ENCODE measurements at regions of chr2 and their contacts with region 1.

Region 1: GRCh38 chr2:198309673-198310280 is 505.4 kb downstream of the PLCL1 start:
- DNase-seq: peak in 1 of 2 experiments; percentile 63
- H3K4me3 ChIP-seq: no peak overlapping the region
- H3K4me3 Mint-ChIP-seq: no peak overlapping the region
- H3K27ac Mint-ChIP-seq: no peak overlapping the region
- H3K4me1 ChIP-seq: 0 out of 2 replicates have a peak, but pooled peaks cover 3% of the 10 kb centered on the region
- H3K4me1 Mint-ChIP-seq: no peaks in the 10 kb centered on the region
- H3K27me3 ChIP-seq: no peaks in the 10 kb centered on the region; the same call in 1 of the 2 replicates
- H3K27me3 Mint-ChIP-seq: peaks cover 16% of the 10 kb centered on the region
- CTCF ChIP-seq: peak; percentile 76 to 80

Region 2: DNA sequence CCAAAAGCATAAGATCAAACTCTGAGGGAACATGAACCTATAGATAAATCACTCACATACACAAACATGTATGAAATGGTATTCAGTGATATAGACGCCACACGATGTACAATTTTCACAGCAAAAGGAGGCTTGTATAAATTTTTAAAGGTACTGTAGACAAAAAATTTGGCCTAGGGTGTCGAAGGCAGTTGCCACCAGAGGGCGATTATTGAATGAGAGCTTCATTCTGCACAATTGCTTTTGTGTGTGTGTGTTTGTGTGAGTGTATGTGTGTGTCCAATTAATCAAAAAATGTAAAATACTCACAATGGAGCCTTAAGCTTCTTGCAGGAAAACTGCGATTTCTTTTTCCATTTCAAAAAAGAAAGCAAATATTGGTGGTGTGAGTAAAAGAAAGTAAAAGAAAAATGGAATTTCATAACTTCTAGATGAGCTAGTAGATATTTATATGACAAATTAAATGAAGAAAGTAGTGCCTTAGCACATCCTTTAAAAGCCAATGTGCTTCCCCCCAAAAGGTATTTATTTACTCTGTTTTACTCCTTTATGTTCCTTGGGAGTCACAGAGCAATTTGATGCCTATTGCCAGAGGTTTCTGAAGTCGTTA is 347.8 kb after region 1 on chr2:
- CTCF ChIA-PET with region 1: interaction called, 3 read pairs
- POLR2A ChIA-PET with region 1: no interaction called
- intact Hi-C with region 1: loop called (anchors 5 kb)
- DNase-seq: peak in 1 of 2 experiments; percentile 22
- H3K4me3 ChIP-seq: no peak overlapping the region
- H3K4me3 Mint-ChIP-seq: no peak overlapping the region
- H3K27ac Mint-ChIP-seq: no peak overlapping the region
- H3K4me1 ChIP-seq: no peaks in the 10 kb centered on the region
- H3K4me1 Mint-ChIP-seq: no peaks in the 10 kb centered on the region
- H3K27me3 ChIP-seq: no peaks in the 10 kb centered on the region
- H3K27me3 Mint-ChIP-seq: no peaks in the 10 kb centered on the region
- CTCF ChIP-seq: peak; percentile 66 to 79

Region 3: DNA sequence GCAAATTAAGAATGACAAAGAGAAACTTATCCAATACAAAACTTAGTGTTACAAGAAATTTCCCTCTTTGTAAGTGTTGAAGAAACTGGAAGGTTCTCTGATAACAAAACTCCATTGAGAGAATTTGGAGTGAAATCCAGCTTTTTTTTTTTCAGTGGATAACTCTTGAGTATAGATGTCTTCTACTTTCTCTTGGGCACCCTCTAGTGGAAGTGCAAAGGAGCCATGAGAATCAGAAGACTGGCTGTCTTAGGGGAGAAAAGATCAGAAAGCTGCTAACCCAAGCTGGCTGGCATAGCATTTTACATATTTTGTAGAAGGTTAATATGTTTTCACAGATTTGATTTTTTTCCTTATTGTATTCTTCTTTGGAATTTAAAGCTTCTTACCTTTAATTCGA is 1286.8 kb after region 1 on chr2:
- CTCF ChIA-PET with region 1: no interaction called
- POLR2A ChIA-PET with region 1: no interaction called
- intact Hi-C with region 1: loop called (anchors 1 kb)
- DNase-seq: peak; percentile 36 to 47
- H3K4me3 ChIP-seq: no peak overlapping the region
- H3K4me3 Mint-ChIP-seq: no peak overlapping the region
- H3K27ac Mint-ChIP-seq: no peak overlapping the region
- H3K4me1 ChIP-seq: no peaks in the 10 kb centered on the region
- H3K4me1 Mint-ChIP-seq: no peaks in the 10 kb centered on the region
- H3K27me3 ChIP-seq: no peaks in the 10 kb centered on the region
- H3K27me3 Mint-ChIP-seq: no peaks in the 10 kb centered on the region
- CTCF ChIP-seq: peak; percentile 55

Region 4: GRCh38 chr2:199739413-199740110 is 1429.8 kb after region 1 on chr2:
- CTCF ChIA-PET with region 1: no interaction called
- POLR2A ChIA-PET with region 1: no interaction called
- intact Hi-C with region 1: loop called (anchors 10 kb)
- DNase-seq: peak; percentile 66 to 77
- H3K4me3 ChIP-seq: no peak overlapping the region
- H3K4me3 Mint-ChIP-seq: no peak overlapping the region
- H3K27ac Mint-ChIP-seq: peak overlapping the region; percentile 43
- H3K4me1 ChIP-seq: peaks cover 43% of the 10 kb centered on the region
- H3K4me1 Mint-ChIP-seq: peaks cover 23% of the 10 kb centered on the region
- H3K27me3 ChIP-seq: no peaks in the 10 kb centered on the region
- H3K27me3 Mint-ChIP-seq: peaks cover 4% of the 10 kb centered on the region
- CTCF ChIP-seq: peak; percentile 79 to 91

Measured in Caco-2 (cell line).